H1 (cell line): ENCODE measurements at regions of chr5 and their contacts with region 1.

Region 1: GRCh38 chr5:153476767-153477166 is 13.7 kb upstream of the GRIA1 start:
- DNase-seq: no peak
- H3K4me3 ChIP-seq: no peak overlapping the region
- H3K27ac ChIP-seq: no peak overlapping the region
- H3K4me1 ChIP-seq: no peaks in the 10 kb centered on the region
- H3K27me3 ChIP-seq: no peaks in the 10 kb centered on the region
- CTCF ChIP-seq: peak in 2 of 3 experiments; percentile 12 to 44; a peak in 2 of 4 replicates
- EP300 ChIP-seq: no peak
- POLR2A ChIP-seq: no peak
- RAD21 ChIP-seq: peak; percentile 23 to 38; a peak in 2 of 4 replicates

Region 2: DNA sequence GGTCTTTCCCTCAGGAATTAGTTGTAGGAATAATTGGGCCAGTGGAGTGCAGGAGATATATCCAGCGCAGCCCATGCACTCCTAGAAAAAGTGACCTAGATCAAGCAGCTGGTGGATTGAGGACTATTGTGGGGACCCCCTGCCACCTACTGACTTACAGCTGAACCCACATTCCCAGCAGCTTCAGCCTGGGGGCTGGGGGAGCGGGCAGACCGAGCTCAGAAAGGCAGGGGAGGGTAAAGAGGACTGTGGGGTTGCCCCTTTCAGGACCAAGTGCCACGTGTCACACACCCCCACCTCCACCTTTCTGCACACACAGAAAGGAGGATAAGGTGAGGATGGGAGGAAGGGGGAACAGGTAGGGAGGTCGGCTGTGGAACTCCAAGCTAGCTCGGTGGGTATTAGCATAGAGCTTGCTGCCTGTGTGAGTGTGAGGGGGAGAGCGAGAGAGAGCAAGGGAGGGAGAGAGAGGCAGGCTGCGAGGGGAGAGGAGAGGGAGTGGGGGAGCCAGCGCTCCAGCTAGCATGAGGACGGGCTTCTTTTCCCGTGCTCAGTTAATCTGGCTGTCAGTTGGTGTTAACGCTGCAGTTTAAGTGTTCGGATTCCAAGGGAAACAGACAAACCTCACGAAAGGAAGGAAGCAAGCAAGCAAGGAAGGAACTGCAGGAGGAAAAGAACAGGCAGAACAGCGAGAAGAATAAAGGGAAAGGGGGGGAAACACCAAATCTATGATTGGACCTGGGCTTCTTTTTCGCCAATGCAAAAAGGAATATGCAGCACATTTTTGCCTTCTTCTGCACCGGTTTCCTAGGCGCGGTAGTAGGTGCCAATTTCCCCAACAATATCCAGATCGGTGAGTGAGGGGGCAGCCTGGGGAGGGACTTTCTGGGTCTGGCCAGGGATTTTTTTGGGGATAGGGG is 13.6 kb after region 1 on chr5 and contains the start of gene GRIA1:
- CTCF ChIA-PET with region 1: interaction called, 17 read pairs
- POLR2A ChIA-PET with region 1: interaction called, 8 read pairs
- DNase-seq: peak; percentile 31 to 60
- H3K4me3 ChIP-seq: peak within 1 kb of the TSS; percentile 47 to 61 (median 50); a peak in 7 of 8 replicates
- H3K27ac ChIP-seq: no peak within 1 kb of the TSS
- H3K4me1 ChIP-seq: peaks cover 0 to 12% (median 8%) of the 10 kb centered on the region in 4 experiments; a peak in 6 of 7 replicates
- H3K27me3 ChIP-seq: peaks cover 0 to 13% (median 4%) of the 10 kb centered on the region in 4 experiments; a peak in 4 of 7 replicates
- CTCF ChIP-seq: peak; percentile 16 to 40 (median 22); a peak in 2 of 4 replicates
- EP300 ChIP-seq: no peak
- POLR2A ChIP-seq: no peak
- RAD21 ChIP-seq: peak; percentile 55 to 64
- total RNA-seq, gene GRIA1: 1.1 and 2.5 TPM in 2 replicates

Region 3: GRCh38 chr5:153523831-153524230 is 47.1 kb after region 1 on chr5:
- CTCF ChIA-PET with region 1: no interaction called
- POLR2A ChIA-PET with region 1: no interaction called
- DNase-seq: no peak
- H3K4me3 ChIP-seq: no peak overlapping the region
- H3K27ac ChIP-seq: no peak overlapping the region
- H3K4me1 ChIP-seq: peaks cover 0 to 6% (median 2%) of the 10 kb centered on the region in 4 experiments; a peak in 4 of 7 replicates
- H3K27me3 ChIP-seq: no peaks in the 10 kb centered on the region
- CTCF ChIP-seq: no peak
- EP300 ChIP-seq: no peak
- POLR2A ChIP-seq: no peak
- RAD21 ChIP-seq: no peak